MCF 10A (cell line): ENCODE measurements at regions of chr2 and their contacts with region 1.

Region 1: DNA sequence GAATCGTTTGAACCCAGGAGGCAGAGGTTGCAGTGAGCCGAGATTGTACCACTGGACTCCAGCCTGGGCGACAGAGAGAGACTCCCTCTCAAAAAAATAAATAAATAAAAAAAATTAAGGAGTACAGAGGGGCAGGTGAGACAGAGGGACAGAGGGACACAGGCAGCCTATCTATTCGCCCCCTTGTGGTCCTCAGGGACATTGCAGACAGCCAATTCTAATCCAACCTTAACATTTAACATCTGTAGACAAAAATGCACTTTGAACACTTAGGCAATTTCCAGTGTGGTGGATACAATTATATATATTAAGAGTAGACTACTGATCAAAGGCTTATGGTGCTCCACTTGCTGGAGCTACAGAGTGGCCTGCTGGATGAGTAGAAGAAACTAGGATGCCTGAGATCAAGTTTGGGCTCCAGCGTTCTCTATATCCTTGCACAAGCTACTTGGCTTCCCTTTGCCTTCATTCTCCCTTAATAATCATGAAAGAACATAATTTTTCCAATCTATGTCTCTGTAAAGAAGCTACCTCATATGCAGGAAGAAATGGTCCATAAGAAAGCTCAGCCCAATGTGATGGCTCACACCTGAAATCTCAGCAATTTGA is 8.2 kb upstream of the SMARCAL1 start:
- DNase-seq: peak; percentile 56
- H3K4me3 Mint-ChIP-seq: no peak overlapping the region
- H3K27ac Mint-ChIP-seq: no peak overlapping the region
- H3K4me1 Mint-ChIP-seq: no peaks in the 10 kb centered on the region
- H3K27me3 Mint-ChIP-seq: peaks cover 31% of the 10 kb centered on the region
- CTCF ChIP-seq: peak; percentile 82

Region 2: GRCh38 chr2:216139884-216140283 is 264.2 kb before region 1 on chr2:
- CTCF ChIA-PET with region 1: no interaction called
- POLR2A ChIA-PET with region 1: no interaction called
- intact Hi-C with region 1: no loop called
- DNase-seq: peak; percentile 19
- H3K4me3 Mint-ChIP-seq: no peak overlapping the region
- H3K27ac Mint-ChIP-seq: peak overlapping the region; percentile 24
- H3K4me1 Mint-ChIP-seq: no peaks in the 10 kb centered on the region
- H3K27me3 Mint-ChIP-seq: no peaks in the 10 kb centered on the region
- CTCF ChIP-seq: no peak

Region 3: GRCh38 chr2:216222650-216223352 is 181.3 kb before region 1 on chr2:
- CTCF ChIA-PET with region 1: interaction called, 27 read pairs
- POLR2A ChIA-PET with region 1: no interaction called
- intact Hi-C with region 1: loop called (anchors 2 kb)
- DNase-seq: peak; percentile 30
- H3K4me3 Mint-ChIP-seq: no peak overlapping the region
- H3K27ac Mint-ChIP-seq: no peak overlapping the region
- H3K4me1 Mint-ChIP-seq: peaks cover 31% of the 10 kb centered on the region
- H3K27me3 Mint-ChIP-seq: no peaks in the 10 kb centered on the region
- CTCF ChIP-seq: peak; percentile 31

Region 4: DNA sequence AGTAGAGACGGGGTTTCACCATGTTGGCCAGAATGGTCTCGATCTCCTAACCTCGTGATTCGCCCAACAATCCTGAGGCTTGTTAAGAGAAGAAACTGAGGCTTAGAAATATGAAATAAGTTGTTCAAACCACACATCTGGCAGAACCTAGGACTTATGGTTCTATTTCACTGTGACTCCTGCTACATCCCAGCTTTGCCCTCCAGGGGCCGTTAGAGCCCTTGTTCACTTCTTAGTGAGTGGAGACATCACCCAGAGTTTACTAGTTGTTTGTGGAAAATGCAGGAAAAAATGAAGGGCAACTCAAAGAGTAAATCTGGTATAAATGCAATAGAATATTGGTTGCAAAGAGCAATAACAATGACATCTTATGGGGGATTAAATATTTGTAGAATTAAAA is 75.8 kb before region 1 on chr2:
- CTCF ChIA-PET with region 1: interaction called, 9 read pairs
- POLR2A ChIA-PET with region 1: no interaction called
- intact Hi-C with region 1: loop called (anchors 1 kb)
- DNase-seq: peak; percentile 55
- H3K4me3 Mint-ChIP-seq: no peak overlapping the region
- H3K27ac Mint-ChIP-seq: no peak overlapping the region
- H3K4me1 Mint-ChIP-seq: no peaks in the 10 kb centered on the region
- H3K27me3 Mint-ChIP-seq: peaks cover 31% of the 10 kb centered on the region
- CTCF ChIP-seq: peak; percentile 12

Region 5: DNA sequence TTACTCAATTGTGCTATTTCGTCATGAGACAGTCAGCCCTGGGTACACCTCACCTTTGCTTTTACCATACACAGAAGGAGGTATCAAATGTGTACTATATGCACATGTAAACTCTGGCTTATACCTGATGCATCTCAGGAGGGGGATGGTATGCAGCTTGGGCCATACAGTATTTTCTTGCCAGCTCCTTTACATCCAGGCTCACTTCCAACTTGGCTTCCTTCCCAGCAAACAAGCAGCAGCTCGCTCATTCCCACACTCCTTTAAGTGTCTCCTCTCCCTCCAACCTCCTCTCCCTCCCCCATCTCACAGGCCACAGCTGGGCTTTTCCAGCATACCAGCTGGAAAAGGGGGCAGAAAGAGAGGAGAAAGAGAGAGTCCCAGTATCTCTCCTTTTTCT is 41.4 kb before region 1 on chr2:
- CTCF ChIA-PET with region 1: interaction called, 14 read pairs
- POLR2A ChIA-PET with region 1: no interaction called
- intact Hi-C with region 1: no loop called
- DNase-seq: peak; percentile 97
- H3K4me3 Mint-ChIP-seq: no peak overlapping the region
- H3K27ac Mint-ChIP-seq: no peak overlapping the region
- H3K4me1 Mint-ChIP-seq: peaks cover 12% of the 10 kb centered on the region
- H3K27me3 Mint-ChIP-seq: peaks cover 65% of the 10 kb centered on the region
- CTCF ChIP-seq: no peak

Region 6: GRCh38 chr2:216371756-216372702 is 32.1 kb before region 1 on chr2 and contains the start of gene MARCHF4:
- CTCF ChIA-PET with region 1: interaction called, 12 read pairs
- POLR2A ChIA-PET with region 1: interaction called, 3 read pairs
- intact Hi-C with region 1: no loop called
- DNase-seq: peak; percentile 60
- H3K4me3 Mint-ChIP-seq: peak within 1 kb of the TSS; percentile 49
- H3K27ac Mint-ChIP-seq: no peak within 1 kb of the TSS
- H3K4me1 Mint-ChIP-seq: peaks cover 26% of the 10 kb centered on the region
- H3K27me3 Mint-ChIP-seq: peaks cover 45% of the 10 kb centered on the region
- CTCF ChIP-seq: no peak
- total RNA-seq, gene MARCHF4: 0.17 and 0.33 TPM in 2 replicates